ENCODE measurements at regions of chr7 and their contacts with region 1.

Region 1: GRCh38 chr7:30284298-30285066 is at the start of gene ZNRF2:
- DNase-seq: peak; percentile 97 to 100 (median 99)
- ATAC-seq: peak; percentile 83
- H3K4me3 ChIP-seq: peak within 1 kb of the TSS; percentile 45 to 75
- H3K4me3 Mint-ChIP-seq: peak within 1 kb of the TSS; percentile 87
- H3K27ac ChIP-seq: peak within 1 kb of the TSS; percentile 76 to 80
- H3K27ac Mint-ChIP-seq: peak within 1 kb of the TSS; percentile 92
- H3K4me1 ChIP-seq: peaks cover 23% of the 10 kb centered on the region
- H3K4me1 Mint-ChIP-seq: peaks cover 40% of the 10 kb centered on the region
- H3K27me3 ChIP-seq: no peaks in the 10 kb centered on the region
- H3K27me3 Mint-ChIP-seq: no peaks in the 10 kb centered on the region
- CTCF ChIP-seq: peak; percentile 46
- total RNA-seq, gene ZNRF2: 20.1 to 26.1 TPM

Region 2: GRCh38 chr7:30134611-30135545 is 149.6 kb before region 1 on chr7 and contains the start of gene MTURN:
- CTCF ChIA-PET with region 1: no interaction called
- POLR2A ChIA-PET with region 1: no interaction called
- intact Hi-C with region 1: loop called (anchors 1 to 5 kb)
- DNase-seq: peak; percentile 68 to 95 (median 86)
- ATAC-seq: peak; percentile 80
- H3K4me3 ChIP-seq: peak within 1 kb of the TSS; percentile 74 to 78
- H3K4me3 Mint-ChIP-seq: peak within 1 kb of the TSS; percentile 91
- H3K27ac ChIP-seq: peak within 1 kb of the TSS; percentile 4 to 49
- H3K27ac Mint-ChIP-seq: peak within 1 kb of the TSS; percentile 90
- H3K4me1 ChIP-seq: peaks cover 15% of the 10 kb centered on the region
- H3K4me1 Mint-ChIP-seq: peaks cover 11% of the 10 kb centered on the region
- H3K27me3 ChIP-seq: no peaks in the 10 kb centered on the region
- H3K27me3 Mint-ChIP-seq: no peaks in the 10 kb centered on the region
- CTCF ChIP-seq: no peak
- total RNA-seq, gene MTURN: 16.1 to 19.7 TPM

Region 3: DNA sequence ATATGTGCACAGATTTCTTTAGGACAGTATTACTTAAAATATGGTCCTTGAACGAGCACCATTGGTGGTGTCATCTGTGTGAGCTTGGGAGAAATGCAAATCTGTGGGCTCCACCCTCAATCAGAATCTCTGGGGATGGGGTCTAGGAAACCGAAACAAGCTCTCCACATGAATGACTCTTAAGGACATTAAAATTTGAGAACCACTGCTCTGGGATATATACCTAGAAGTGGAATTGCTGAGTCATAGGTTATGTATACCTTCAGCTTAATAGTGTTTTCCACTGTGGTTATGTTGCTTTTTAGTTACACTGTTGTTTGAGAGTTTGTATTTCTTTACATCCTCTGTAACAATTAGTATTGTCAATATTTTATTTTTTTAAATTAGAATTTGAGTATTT is 23.9 kb after region 1 on chr7:
- CTCF ChIA-PET with region 1: no interaction called
- POLR2A ChIA-PET with region 1: interaction called, 5 read pairs
- intact Hi-C with region 1: loop called in 1 of 2 experiments (anchors 2 kb)
- DNase-seq: no peak
- ATAC-seq: no peak
- H3K4me3 ChIP-seq: no peak overlapping the region
- H3K4me3 Mint-ChIP-seq: no peak overlapping the region
- H3K27ac ChIP-seq: no peak overlapping the region
- H3K27ac Mint-ChIP-seq: no peak overlapping the region
- H3K4me1 ChIP-seq: peaks cover 25% of the 10 kb centered on the region
- H3K4me1 Mint-ChIP-seq: peaks cover 79% of the 10 kb centered on the region
- H3K27me3 ChIP-seq: no peaks in the 10 kb centered on the region
- H3K27me3 Mint-ChIP-seq: no peaks in the 10 kb centered on the region
- CTCF ChIP-seq: no peak

Region 4: GRCh38 chr7:30322271-30323005 is 38.0 kb after region 1 on chr7:
- CTCF ChIA-PET with region 1: no interaction called
- POLR2A ChIA-PET with region 1: interaction called, 16 read pairs
- intact Hi-C with region 1: loop called (anchors 2 kb)
- DNase-seq: peak in 6 of 9 experiments; percentile 8 to 76 (median 18)
- ATAC-seq: peak; percentile 63
- H3K4me3 ChIP-seq: peak overlapping the region; percentile 26 to 30
- H3K4me3 Mint-ChIP-seq: peak overlapping the region; percentile 87
- H3K27ac ChIP-seq: peak overlapping the region; percentile 53 to 92
- H3K27ac Mint-ChIP-seq: peak overlapping the region; percentile 98
- H3K4me1 ChIP-seq: peaks cover 31% of the 10 kb centered on the region
- H3K4me1 Mint-ChIP-seq: peaks cover 77% of the 10 kb centered on the region
- H3K27me3 ChIP-seq: no peaks in the 10 kb centered on the region
- H3K27me3 Mint-ChIP-seq: no peaks in the 10 kb centered on the region
- CTCF ChIP-seq: no peak

Region 5: DNA sequence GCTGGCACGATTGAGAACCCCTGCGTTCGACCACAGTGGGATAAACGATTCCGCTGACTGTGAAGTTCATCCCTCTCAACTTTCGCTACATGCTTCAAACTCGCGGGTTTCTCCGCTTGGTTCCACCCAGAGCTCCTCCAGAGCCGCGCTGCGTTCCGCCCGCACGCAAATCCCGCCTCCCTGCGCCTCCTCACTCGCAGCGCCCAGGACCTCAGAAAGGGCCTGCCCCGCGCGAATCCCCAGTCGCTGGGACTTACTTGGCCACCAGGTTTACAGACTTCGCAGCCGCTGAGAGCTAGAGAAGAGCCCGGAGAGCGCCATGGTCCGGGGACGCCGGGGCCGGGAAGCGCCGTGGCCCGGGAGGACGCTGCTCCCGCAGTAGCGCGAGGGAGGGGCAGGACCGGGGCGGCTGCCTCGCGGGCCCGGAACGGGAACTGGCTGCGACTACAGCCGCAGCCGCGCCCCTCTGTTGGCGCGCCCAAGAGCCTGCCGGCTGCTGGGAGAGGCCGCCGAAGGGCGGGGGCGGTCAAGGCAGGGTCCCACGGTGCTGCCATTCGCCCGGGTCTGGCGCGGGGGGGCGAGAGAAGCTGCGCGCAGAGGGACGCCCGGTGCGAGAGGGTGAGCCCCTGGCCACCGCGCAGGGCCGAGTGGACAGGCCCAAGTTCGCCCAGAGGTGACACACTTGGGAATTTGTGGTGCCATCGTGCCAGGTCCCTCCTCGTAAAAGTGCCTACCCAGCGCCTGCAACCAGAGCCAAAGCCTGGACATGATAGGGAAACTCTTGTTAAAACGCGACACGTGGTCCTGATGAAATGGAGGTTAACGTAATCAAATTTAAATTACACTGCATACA is 194.1 kb after region 1 on chr7 and contains the start of gene NOD1:
- CTCF ChIA-PET with region 1: no interaction called
- POLR2A ChIA-PET with region 1: interaction called, 9 read pairs
- intact Hi-C with region 1: loop called in 1 of 2 experiments (anchors 1 kb)
- DNase-seq: peak; percentile 13 to 81 (median 63)
- ATAC-seq: peak; percentile 81
- H3K4me3 ChIP-seq: peak within 1 kb of the TSS; percentile 68 to 80
- H3K4me3 Mint-ChIP-seq: peak within 1 kb of the TSS; percentile 95
- H3K27ac ChIP-seq: peak within 1 kb of the TSS; percentile 62 to 70
- H3K27ac Mint-ChIP-seq: peak within 1 kb of the TSS; percentile 89
- H3K4me1 ChIP-seq: peaks cover 11% of the 10 kb centered on the region
- H3K4me1 Mint-ChIP-seq: peaks cover 57% of the 10 kb centered on the region
- H3K27me3 ChIP-seq: no peaks in the 10 kb centered on the region
- H3K27me3 Mint-ChIP-seq: no peaks in the 10 kb centered on the region
- CTCF ChIP-seq: no peak
- total RNA-seq, gene NOD1: 8.4 to 11.1 TPM

Region 6: DNA sequence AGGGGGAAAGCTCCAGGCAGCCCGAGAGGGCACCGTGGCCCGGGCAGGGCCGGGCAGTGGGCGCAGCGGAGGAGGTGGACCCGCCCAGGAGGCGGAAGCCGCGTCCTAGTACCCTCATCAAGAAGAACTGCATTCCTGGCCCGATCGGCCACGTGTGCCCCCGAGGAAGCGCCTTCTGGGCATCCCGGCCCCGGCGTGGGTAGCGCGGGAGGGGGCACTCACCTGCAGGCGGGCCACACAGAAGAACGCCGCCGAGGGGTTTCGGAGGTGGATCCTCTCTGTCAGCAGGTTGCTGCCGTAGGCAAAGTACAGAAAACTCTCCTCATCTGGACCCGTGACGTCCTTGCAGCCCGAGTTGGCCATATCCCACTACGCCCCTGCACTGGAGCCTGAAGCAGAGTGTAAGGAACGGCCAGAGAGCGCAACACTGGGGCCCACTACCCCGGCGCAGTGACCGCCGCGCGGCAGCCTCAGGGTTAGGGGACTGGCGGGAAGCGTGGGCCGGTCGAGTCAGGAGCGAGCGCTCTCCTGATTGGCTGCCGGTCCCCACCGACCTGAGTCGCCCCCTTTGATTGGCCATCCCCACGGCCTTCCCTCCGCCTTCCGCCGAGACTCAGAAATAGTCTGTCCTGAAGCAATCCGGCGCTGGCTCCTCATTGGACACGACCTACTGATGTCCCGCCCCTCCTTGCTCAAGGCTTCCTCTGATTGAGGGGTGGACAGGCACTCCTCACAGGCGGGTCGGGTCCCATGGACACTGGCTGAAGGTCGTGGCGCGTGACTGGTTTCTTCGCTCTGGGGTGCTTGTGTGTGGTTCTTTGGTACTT is 220.1 kb after region 1 on chr7 and contains the start of gene GGCT:
- CTCF ChIA-PET with region 1: no interaction called
- POLR2A ChIA-PET with region 1: interaction called, 3 read pairs
- intact Hi-C with region 1: loop called (anchors 1 to 2 kb)
- DNase-seq: peak; percentile 90 to 98 (median 96)
- ATAC-seq: peak; percentile 97
- H3K4me3 ChIP-seq: peak within 1 kb of the TSS; percentile 80 to 98
- H3K4me3 Mint-ChIP-seq: peak within 1 kb of the TSS; percentile 95
- H3K27ac ChIP-seq: peak within 1 kb of the TSS; percentile 50 to 70
- H3K27ac Mint-ChIP-seq: peak within 1 kb of the TSS; percentile 94
- H3K4me1 ChIP-seq: peaks cover 23% of the 10 kb centered on the region
- H3K4me1 Mint-ChIP-seq: peaks cover 39% of the 10 kb centered on the region
- H3K27me3 ChIP-seq: no peaks in the 10 kb centered on the region
- H3K27me3 Mint-ChIP-seq: no peaks in the 10 kb centered on the region
- CTCF ChIP-seq: no peak
- total RNA-seq, gene GGCT: 5.9 to 6.1 TPM